ENCODE measurements at regions of chr12 and their contacts with region 1.

Region 1: DNA sequence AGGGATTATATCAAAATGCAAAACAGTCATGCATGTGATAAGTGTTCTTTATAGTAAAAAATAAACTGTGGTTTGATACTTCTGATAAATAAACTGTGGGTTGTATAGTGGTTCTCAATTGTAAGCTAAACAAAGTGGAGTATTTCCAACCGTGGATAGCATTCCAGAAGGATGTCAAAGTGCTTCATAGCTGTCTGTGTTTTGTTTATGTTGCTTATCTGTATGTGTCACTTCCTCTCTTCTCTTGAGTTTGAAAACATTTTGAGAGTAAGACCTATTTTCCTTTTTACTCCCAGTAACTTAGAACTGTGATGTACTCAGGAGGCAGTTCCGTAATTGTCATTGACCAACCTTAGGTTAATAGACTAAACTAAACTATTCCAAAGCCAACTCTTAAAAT is 415.8 kb downstream of the TMTC2 start:
- DNase-seq: no peak
- ATAC-seq: no peak
- H3K4me3 ChIP-seq: no peak overlapping the region
- H3K27ac ChIP-seq: no peak overlapping the region
- H3K4me1 ChIP-seq: no peaks in the 10 kb centered on the region
- H3K27me3 ChIP-seq: no peaks in the 10 kb centered on the region
- CTCF ChIP-seq: no peak

Region 2: DNA sequence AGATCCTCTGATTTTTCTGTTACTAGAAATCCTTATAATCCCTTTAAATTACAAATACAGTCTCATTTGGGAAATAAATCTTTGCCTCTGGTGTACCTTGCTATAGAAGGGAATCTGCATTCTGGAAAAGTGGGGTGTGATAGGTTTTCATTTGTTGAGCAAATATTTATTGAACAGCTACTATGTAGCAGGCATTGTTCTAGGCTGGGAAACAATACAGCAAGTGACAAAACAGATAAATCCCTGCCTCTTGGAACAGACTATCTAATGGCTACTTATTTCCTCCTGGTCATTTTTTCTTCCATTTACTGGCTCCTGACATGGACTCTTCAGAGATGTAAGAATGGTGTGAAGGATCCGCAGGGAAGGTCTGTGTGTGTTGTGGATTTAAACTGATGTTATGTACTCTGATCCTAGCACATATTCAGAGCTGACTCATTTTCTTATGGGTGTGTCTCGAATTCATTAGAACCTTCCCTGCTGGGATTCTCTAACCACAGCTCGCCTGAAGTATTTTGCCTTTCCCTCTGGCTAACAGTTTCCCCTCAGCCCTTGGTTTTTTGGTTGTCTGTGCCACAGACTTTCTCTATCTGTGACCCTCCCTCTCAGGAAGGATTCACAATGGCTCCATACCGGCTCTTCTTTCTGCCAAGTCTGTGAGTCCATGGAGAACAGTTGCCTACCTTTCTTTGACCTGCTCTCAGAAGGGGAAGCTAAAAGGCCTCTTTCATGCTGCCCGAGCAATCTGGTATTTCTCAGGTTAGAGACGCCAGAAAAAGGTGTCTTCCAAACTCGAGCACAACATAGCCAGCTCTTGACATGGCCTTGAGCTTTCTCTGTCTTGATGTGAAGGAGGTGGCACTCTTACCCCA is 362.1 kb before region 1 on chr12:
- intact Hi-C with region 1: no loop called
- DNase-seq: no peak
- ATAC-seq: no peak
- H3K4me3 ChIP-seq: no peak overlapping the region
- H3K27ac ChIP-seq: no peak overlapping the region
- H3K4me1 ChIP-seq: no peaks in the 10 kb centered on the region
- H3K27me3 ChIP-seq: no peaks in the 10 kb centered on the region
- CTCF ChIP-seq: no peak

Region 3: GRCh38 chr12:83505586-83505985 is 403.1 kb after region 1 on chr12:
- intact Hi-C with region 1: loop called in 1 of 3 experiments (anchors 5 kb)
- DNase-seq: no peak
- ATAC-seq: no peak
- H3K4me3 ChIP-seq: no peak overlapping the region
- H3K27ac ChIP-seq: no peak overlapping the region
- H3K4me1 ChIP-seq: no peaks in the 10 kb centered on the region
- H3K27me3 ChIP-seq: no peaks in the 10 kb centered on the region
- CTCF ChIP-seq: no peak

Measured in pancreas (tissue), 10 donors.